ENCODE measurements at regions of chr2 and their contacts with region 1.

Region 1: GRCh38 chr2:36408198-36408703 is 52.7 kb downstream of the CRIM1 start:
- DNase-seq: no peak
- ATAC-seq: peak; percentile 34

Region 2: GRCh38 chr2:36371928-36372391 is 36.3 kb before region 1 on chr2:
- intact Hi-C with region 1: loop called (anchors 5 kb)
- DNase-seq: no peak
- ATAC-seq: no peak

Region 3: DNA sequence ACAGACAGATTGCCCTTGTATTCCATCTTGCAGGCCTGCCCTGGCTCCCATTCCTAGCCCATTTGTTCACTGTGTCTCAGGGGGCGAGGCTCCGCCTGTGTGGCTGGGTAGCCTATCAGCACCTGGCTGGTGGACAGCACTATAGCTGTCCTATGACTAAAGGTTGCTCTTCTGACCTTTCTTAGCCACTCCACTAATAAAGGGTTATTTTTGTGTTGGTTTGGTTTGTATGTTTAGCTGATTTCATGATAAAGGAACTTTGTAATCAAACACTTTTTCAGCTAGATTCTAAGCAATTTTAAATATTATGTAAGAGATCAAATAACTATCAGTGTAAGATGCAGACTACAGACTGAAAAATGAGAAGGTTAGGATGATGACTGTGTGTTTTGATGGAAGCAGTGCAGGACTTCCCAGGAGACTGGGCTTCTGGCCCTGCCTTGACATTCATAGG is 19.6 kb after region 1 on chr2:
- intact Hi-C with region 1: no loop called
- DNase-seq: no peak
- ATAC-seq: no peak

Region 4: GRCh38 chr2:36482576-36483214 is 74.4 kb after region 1 on chr2:
- intact Hi-C with region 1: loop called (anchors 5 kb)
- DNase-seq: no peak
- ATAC-seq: no peak

Region 5: GRCh38 chr2:36530178-36530982 is 122.1 kb after region 1 on chr2:
- intact Hi-C with region 1: no loop called
- DNase-seq: no peak
- ATAC-seq: no peak

Measured in Right ventricle myocardium inferior (tissue), 1 donor.